MCF 10A (cell line): ENCODE measurements at regions of chr2 and their contacts with region 1.

Region 1: DNA sequence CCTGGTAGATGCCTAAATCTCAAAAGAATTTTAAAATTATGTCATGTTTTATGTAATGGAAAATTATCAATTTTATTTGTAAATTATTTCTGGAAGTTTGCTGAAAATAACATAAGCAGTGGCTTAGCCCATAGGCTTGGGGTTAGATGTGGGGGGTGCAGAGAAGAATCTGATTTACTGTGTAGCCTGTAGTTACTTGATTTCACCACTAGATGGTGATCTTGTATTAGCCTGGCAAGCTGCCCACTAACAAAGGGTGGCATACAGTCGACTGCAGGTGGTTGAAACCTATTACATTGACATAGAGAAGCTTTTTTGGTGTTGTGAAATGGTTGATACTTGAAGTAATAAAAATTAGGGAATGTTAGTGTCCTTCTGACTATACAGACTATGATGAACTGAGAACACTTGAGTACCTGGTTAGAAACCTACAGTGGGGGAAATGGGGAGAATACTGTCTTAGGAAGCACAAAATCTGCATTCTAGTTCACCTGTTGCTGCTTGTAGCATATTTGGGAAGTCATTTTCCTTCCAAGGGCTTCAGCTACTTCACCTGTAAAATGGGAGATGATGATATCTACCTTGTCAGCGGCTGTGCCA is 191.0 kb upstream of the LHCGR start:
- DNase-seq: peak; percentile 74
- H3K4me3 Mint-ChIP-seq: no peak overlapping the region
- H3K27ac Mint-ChIP-seq: no peak overlapping the region
- H3K4me1 Mint-ChIP-seq: no peaks in the 10 kb centered on the region
- H3K27me3 Mint-ChIP-seq: no peaks in the 10 kb centered on the region
- CTCF ChIP-seq: peak; percentile 82

Region 2: DNA sequence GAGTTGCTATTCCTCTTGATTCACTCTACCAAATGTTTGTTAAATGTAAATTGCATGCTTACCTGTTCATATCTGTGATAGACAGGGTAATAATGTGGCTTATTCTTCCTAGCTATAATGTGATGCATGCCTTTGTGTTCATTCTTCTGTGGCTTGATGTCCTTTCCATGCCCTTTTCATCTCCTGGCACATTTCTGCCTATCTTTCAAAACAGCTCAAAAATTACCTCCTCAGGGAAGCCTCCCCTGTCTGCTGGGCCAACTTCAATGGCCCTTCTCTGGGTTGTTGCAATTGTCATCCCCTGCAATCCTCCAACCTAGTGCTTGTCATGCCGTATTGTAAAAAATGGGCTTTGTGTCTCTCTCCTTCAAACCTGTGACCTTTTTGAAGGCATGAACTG is 138.2 kb before region 1 on chr2:
- CTCF ChIA-PET with region 1: no interaction called
- POLR2A ChIA-PET with region 1: no interaction called
- intact Hi-C with region 1: loop called (anchors 10 kb)
- DNase-seq: no peak
- H3K4me3 Mint-ChIP-seq: no peak overlapping the region
- H3K27ac Mint-ChIP-seq: no peak overlapping the region
- H3K4me1 Mint-ChIP-seq: no peaks in the 10 kb centered on the region
- H3K27me3 Mint-ChIP-seq: no peaks in the 10 kb centered on the region
- CTCF ChIP-seq: no peak

Region 3: GRCh38 chr2:49153252-49153651 is 206.7 kb after region 1 on chr2:
- CTCF ChIA-PET with region 1: no interaction called
- POLR2A ChIA-PET with region 1: no interaction called
- intact Hi-C with region 1: no loop called
- DNase-seq: no peak
- H3K4me3 Mint-ChIP-seq: no peak overlapping the region
- H3K27ac Mint-ChIP-seq: no peak overlapping the region
- H3K4me1 Mint-ChIP-seq: no peaks in the 10 kb centered on the region
- H3K27me3 Mint-ChIP-seq: no peaks in the 10 kb centered on the region
- CTCF ChIP-seq: no peak

Region 4: GRCh38 chr2:49248506-49248905 is 302.0 kb after region 1 on chr2:
- CTCF ChIA-PET with region 1: no interaction called
- POLR2A ChIA-PET with region 1: no interaction called
- intact Hi-C with region 1: loop called (anchors 5 kb)
- DNase-seq: peak; percentile 87
- H3K4me3 Mint-ChIP-seq: no peak overlapping the region
- H3K27ac Mint-ChIP-seq: no peak overlapping the region
- H3K4me1 Mint-ChIP-seq: peaks cover 11% of the 10 kb centered on the region
- H3K27me3 Mint-ChIP-seq: no peaks in the 10 kb centered on the region
- CTCF ChIP-seq: no peak

Region 5: GRCh38 chr2:49687918-49688317 is 741.4 kb after region 1 on chr2:
- CTCF ChIA-PET with region 1: interaction called, 3 read pairs
- POLR2A ChIA-PET with region 1: no interaction called
- intact Hi-C with region 1: loop called (anchors 5 kb)
- DNase-seq: no peak
- H3K4me3 Mint-ChIP-seq: no peak overlapping the region
- H3K27ac Mint-ChIP-seq: no peak overlapping the region
- H3K4me1 Mint-ChIP-seq: no peaks in the 10 kb centered on the region
- H3K27me3 Mint-ChIP-seq: peaks cover 22% of the 10 kb centered on the region
- CTCF ChIP-seq: peak; percentile 39